ENCODE measurements at regions of chr13 and their contacts with region 1.

Region 1: DNA sequence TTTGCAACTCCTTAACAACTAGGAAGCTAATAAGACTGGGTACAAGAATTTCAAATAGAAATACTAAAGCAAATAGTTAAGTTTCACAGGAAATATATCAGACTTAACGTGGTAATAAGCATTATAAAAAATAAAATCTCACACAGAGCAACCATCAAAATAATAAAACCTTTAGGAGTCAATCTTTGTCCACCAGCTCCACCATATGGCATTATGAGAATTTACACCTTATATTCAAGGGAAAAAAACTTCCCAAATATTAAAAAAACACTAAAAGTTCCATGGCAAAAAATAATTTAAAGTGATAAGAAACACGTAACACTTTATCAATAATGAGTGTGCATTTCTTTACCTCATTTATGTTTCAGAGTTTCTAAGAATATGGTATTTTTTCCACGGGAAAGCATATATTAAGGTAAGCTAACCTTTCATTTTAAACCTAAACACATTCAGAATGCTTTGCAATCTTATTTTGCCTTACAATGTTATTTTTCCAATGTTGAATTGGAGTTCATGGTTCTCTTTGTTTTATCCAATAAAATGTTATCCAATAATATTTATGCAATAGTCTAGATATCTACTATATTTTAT is 423.2 kb upstream of the SGCG start:
- DNase-seq: no peak
- ATAC-seq: no peak

Region 2: DNA sequence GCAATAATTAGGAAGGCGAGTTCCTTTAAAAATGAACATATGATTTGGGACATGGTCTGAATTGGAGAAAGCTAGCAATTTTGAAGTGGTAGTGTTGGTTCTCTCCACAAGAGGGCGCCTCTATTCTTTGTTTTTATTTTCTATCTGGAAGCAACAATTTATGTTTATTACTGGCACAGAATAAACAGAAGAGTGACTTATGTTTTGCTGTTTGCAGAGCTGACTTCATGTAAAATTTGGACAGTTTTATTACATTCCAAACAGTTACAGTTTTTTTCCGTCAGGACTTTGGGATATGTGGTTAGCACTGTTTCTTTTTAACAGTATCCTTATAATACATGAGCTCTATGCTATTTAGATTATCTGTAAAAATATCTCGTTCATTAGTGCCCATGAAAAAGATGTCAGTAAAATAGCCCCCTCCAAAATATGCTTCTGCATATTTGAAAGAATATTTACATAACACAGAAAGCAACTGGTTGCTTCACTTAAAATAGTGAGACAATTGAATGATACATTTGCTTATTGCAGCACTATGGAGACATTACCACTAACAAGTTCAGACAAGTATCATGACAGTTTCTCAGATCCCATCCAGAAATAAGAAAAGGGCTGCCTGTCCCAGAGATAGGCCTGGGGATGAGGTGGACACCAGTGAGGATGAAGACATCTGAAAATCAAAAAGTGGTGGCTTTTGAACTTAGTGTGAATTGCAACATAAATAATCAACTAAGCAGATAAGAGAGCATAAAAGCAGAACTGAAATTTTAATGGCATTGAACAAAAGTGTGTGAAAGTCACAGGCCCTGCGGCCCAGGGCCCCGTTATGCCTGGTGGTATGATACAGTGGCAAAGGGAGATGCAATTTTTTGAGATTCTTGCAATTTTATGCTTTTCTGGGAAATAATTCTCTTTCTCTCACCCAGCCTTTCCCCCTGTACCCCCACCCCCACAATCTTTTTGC is 1119.0 kb before region 1 on chr13:
- intact Hi-C with region 1: loop called (anchors 5 to 10 kb)
- DNase-seq: no peak
- ATAC-seq: peak in 1 of 2 donors; percentile 30

Region 3: GRCh38 chr13:22168437-22169190 is 589.0 kb before region 1 on chr13:
- intact Hi-C with region 1: loop called in 1 of 2 experiments (anchors 5 kb)
- DNase-seq: no peak
- ATAC-seq: no peak

Measured in left cardiac atrium (tissue), 4 donors.